ENCODE measurements at regions of chr3 and their contacts with region 1.

Region 1: GRCh38 chr3:127544192-127544802 is 46.2 kb downstream of the TPRA1 start:
- DNase-seq: peak; percentile 43
- H3K4me3 ChIP-seq: no peak overlapping the region
- H3K27ac ChIP-seq: no peak overlapping the region
- H3K4me1 ChIP-seq: peaks cover 5% of the 10 kb centered on the region
- H3K27me3 ChIP-seq: no peaks in the 10 kb centered on the region
- CTCF ChIP-seq: peak; percentile 79 to 89

Region 2: DNA sequence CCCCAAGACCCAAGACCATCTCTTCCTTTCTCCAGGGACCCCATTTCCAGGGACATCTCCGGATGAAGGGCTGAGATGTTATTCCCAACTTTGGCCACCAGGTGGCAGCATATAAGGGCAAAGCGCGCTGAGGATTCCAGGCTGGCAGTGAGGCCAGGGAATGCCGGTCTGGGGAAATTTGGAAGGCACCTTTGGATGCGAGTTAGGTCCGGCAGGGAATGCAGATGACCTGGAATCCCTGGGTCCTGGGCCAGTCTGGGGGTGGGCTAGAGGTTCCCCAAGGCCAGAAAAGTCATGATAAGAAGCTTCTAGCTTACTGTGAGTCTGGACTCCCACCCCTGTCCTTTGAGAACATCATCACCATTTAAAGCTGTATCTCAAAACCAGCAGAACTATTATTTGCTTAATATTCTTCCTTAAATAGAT is 1021.9 kb before region 1 on chr3:
- CTCF ChIA-PET with region 1: no interaction called
- dilution Hi-C with region 1: no loop called
- in situ Hi-C with region 1: loop called in 1 of 2 experiments (anchors 25 kb)
- intact Hi-C with region 1: loop called (anchors 2 kb)
- DNase-seq: peak; percentile 31
- H3K4me3 ChIP-seq: no peak overlapping the region
- H3K27ac ChIP-seq: no peak overlapping the region
- H3K4me1 ChIP-seq: peaks cover 5% of the 10 kb centered on the region
- H3K27me3 ChIP-seq: peaks cover 4% of the 10 kb centered on the region
- CTCF ChIP-seq: peak; percentile 62 to 89

Region 3: DNA sequence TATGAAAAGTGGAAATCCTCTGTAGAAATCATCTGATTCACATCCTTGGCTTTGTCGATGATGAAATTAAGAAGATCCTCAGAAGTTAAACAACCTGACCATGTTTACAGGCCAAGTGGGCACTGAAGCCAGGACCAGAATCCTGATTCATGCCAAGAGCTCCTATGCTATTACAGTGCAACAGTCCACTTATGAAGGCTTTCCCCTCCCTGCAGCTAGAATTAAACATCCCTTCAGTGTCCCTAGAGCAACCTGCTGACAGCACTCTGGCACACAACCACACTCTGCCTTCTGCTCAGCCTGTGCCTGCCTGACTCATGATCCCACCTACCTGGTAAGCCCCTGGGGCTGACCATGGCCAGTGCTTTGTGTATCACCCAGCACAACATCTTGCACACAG is 923.1 kb before region 1 on chr3:
- CTCF ChIA-PET with region 1: no interaction called
- dilution Hi-C with region 1: no loop called
- in situ Hi-C with region 1: no loop called
- intact Hi-C with region 1: no loop called
- DNase-seq: peak; percentile 55
- H3K4me3 ChIP-seq: no peak overlapping the region
- H3K27ac ChIP-seq: peak overlapping the region; percentile 44
- H3K4me1 ChIP-seq: peaks cover 39% of the 10 kb centered on the region
- H3K27me3 ChIP-seq: no peaks in the 10 kb centered on the region
- CTCF ChIP-seq: no peak

Region 4: DNA sequence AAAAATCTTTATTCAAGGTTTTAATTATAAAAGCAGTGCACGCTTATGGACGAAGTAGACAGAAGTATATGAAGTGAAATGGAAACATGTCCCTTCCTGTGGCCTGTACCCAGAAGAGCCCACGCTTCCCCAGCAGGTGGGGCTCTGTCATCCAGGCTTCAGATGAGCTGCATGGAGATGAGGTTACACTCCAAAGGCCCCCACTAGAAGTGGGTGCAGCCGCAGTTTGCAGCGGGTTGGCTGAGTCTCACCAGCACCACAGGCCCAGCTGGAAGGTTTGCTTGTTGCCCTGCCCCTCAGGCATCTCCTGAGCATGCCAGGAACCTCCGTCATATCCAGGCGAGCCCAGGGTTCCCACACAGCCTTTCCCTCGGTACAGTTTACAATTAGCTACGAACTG is 289.6 kb before region 1 on chr3:
- CTCF ChIA-PET with region 1: no interaction called
- dilution Hi-C with region 1: no loop called
- in situ Hi-C with region 1: no loop called
- intact Hi-C with region 1: loop called (anchors 1 kb)
- DNase-seq: peak; percentile 67
- H3K4me3 ChIP-seq: no peak overlapping the region
- H3K27ac ChIP-seq: no peak overlapping the region
- H3K4me1 ChIP-seq: no peaks in the 10 kb centered on the region
- H3K27me3 ChIP-seq: no peaks in the 10 kb centered on the region
- CTCF ChIP-seq: peak; percentile 48 to 75

Region 5: GRCh38 chr3:127316685-127317084 is 227.6 kb before region 1 on chr3:
- CTCF ChIA-PET with region 1: no interaction called
- dilution Hi-C with region 1: no loop called
- in situ Hi-C with region 1: no loop called
- intact Hi-C with region 1: no loop called
- DNase-seq: no peak
- H3K4me3 ChIP-seq: no peak overlapping the region
- H3K27ac ChIP-seq: no peak overlapping the region
- H3K4me1 ChIP-seq: no peaks in the 10 kb centered on the region
- H3K27me3 ChIP-seq: no peaks in the 10 kb centered on the region
- CTCF ChIP-seq: no peak

Region 6: GRCh38 chr3:127374086-127375010 is 169.9 kb before region 1 on chr3:
- CTCF ChIA-PET with region 1: no interaction called
- dilution Hi-C with region 1: no loop called
- in situ Hi-C with region 1: no loop called
- intact Hi-C with region 1: loop called (anchors 10 kb)
- DNase-seq: no peak
- H3K4me3 ChIP-seq: no peak overlapping the region
- H3K27ac ChIP-seq: no peak overlapping the region
- H3K4me1 ChIP-seq: no peaks in the 10 kb centered on the region
- H3K27me3 ChIP-seq: peaks cover 2% of the 10 kb centered on the region
- CTCF ChIP-seq: peak; percentile 47 to 54

Region 7: DNA sequence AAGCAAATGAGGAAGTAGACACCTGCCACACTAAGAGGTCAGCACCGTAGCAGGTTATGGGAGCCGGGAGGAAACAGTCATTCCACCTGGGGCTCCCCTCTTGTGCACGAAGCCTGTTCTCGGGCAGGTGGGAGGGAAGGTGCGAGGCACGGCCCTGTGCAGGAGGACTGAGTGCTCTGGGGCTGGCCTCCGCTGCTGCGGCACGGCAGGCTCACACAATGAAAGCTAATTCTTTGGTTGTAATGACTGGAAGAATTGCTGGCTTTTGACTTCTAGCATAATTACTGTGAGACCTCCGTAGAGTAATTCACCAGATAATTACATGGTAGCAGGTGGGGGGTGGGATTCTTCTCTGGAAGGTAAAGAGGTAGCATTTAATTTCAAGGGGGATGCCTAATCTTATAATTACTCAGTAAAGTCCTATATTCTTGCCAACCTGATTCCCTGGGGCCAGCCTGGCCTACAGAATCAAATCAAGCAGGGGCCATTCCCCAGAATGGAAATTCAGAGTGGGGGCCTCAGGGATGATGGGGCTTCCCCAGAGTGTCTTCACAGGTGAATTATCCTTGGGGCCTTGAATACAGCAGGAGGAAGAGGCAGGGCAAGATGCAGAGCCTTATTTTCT is 82.9 kb before region 1 on chr3:
- CTCF ChIA-PET with region 1: interaction called, 3 read pairs
- dilution Hi-C with region 1: no loop called
- in situ Hi-C with region 1: no loop called
- intact Hi-C with region 1: loop called (anchors 1 kb)
- DNase-seq: no peak
- H3K4me3 ChIP-seq: no peak overlapping the region
- H3K27ac ChIP-seq: no peak overlapping the region
- H3K4me1 ChIP-seq: peaks cover 22% of the 10 kb centered on the region
- H3K27me3 ChIP-seq: no peaks in the 10 kb centered on the region
- CTCF ChIP-seq: no peak

Region 8: DNA sequence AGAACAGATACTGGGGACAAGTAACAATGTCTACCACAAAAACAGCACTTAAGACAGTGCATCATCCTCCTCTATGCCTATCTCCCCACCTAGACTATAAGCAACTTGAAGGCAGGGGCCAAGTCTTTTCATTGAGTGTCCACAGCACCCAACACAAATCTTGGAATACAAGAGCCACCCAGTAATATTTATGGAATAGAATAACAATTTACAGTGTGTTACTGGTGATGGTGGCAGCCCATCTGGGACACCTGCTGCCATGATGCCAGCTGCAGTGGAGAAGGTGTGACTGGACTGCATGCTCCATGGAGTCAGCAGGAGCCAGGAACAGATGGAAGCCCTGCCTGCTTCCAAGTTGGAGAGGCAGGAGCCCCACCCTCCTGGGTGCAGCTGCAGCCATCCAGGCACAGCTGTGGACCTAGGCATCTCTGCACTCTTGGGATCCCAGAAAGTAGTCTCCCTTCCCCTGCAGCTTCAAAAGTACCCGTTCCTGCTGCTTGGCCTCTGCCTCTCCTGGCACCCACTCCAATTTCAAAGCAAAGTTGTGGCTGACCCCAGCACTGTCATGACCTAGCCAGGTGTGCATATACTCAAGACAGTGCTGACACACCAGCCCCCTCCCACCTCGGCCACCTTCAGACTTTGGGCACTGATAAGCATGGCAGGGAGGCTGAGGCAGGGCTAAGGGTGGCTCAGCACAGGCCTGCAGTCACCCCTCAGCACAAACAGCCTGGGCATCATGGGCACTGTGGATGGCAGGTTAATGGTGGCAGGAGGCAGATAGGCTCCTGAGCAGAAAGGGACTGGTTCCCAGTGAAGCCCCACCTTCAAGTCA is 48.3 kb before region 1 on chr3:
- CTCF ChIA-PET with region 1: no interaction called
- dilution Hi-C with region 1: loop called (anchors 5 kb)
- in situ Hi-C with region 1: no loop called
- intact Hi-C with region 1: no loop called
- DNase-seq: no peak
- H3K4me3 ChIP-seq: no peak overlapping the region
- H3K27ac ChIP-seq: no peak overlapping the region
- H3K4me1 ChIP-seq: no peaks in the 10 kb centered on the region
- H3K27me3 ChIP-seq: no peaks in the 10 kb centered on the region
- CTCF ChIP-seq: no peak

Measured in mammary epithelial cell (primary cell).